ENCODE measurements at regions of chr2 and their contacts with region 1.

Region 1: GRCh38 chr2:28751252-28751955 is at the start of gene PPP1CB:
- DNase-seq: peak; percentile 99
- ATAC-seq: peak; percentile 86
- H3K4me3 ChIP-seq: peak within 1 kb of the TSS; percentile 86 to 99 (median 94)
- H3K4me3 Mint-ChIP-seq: peak within 1 kb of the TSS; percentile 95
- H3K27ac ChIP-seq: peak within 1 kb of the TSS; percentile 95 to 98
- H3K27ac Mint-ChIP-seq: peak within 1 kb of the TSS; percentile 96
- H3K4me1 ChIP-seq: peaks cover 29 to 33% of the 10 kb centered on the region in 2 donors
- H3K4me1 Mint-ChIP-seq: peaks cover 53% of the 10 kb centered on the region
- H3K27me3 ChIP-seq: no peaks in the 10 kb centered on the region
- H3K27me3 Mint-ChIP-seq: no peaks in the 10 kb centered on the region
- CTCF ChIP-seq: no peak
- total RNA-seq, gene PPP1CB: 152 and 161 TPM in 2 replicates

Region 2: GRCh38 chr2:27356382-27357181 is 1394.8 kb before region 1 on chr2 and contains the start of gene GTF3C2:
- CTCF ChIA-PET with region 1: no interaction called
- POLR2A ChIA-PET with region 1: no interaction called
- intact Hi-C with region 1: loop called (anchors 5 kb)
- DNase-seq: peak; percentile 98
- ATAC-seq: peak; percentile 82
- H3K4me3 ChIP-seq: peak within 1 kb of the TSS; percentile 64 to 90 (median 82)
- H3K4me3 Mint-ChIP-seq: peak within 1 kb of the TSS; percentile 97
- H3K27ac ChIP-seq: peak within 1 kb of the TSS; percentile 86 to 88
- H3K27ac Mint-ChIP-seq: peak within 1 kb of the TSS; percentile 99
- H3K4me1 ChIP-seq: peaks cover 18 to 25% of the 10 kb centered on the region in 2 donors
- H3K4me1 Mint-ChIP-seq: peaks cover 48% of the 10 kb centered on the region
- H3K27me3 ChIP-seq: no peaks in the 10 kb centered on the region
- H3K27me3 Mint-ChIP-seq: no peaks in the 10 kb centered on the region
- CTCF ChIP-seq: no peak
- total RNA-seq, gene GTF3C2: 114 and 121 TPM in 2 replicates

Region 3: DNA sequence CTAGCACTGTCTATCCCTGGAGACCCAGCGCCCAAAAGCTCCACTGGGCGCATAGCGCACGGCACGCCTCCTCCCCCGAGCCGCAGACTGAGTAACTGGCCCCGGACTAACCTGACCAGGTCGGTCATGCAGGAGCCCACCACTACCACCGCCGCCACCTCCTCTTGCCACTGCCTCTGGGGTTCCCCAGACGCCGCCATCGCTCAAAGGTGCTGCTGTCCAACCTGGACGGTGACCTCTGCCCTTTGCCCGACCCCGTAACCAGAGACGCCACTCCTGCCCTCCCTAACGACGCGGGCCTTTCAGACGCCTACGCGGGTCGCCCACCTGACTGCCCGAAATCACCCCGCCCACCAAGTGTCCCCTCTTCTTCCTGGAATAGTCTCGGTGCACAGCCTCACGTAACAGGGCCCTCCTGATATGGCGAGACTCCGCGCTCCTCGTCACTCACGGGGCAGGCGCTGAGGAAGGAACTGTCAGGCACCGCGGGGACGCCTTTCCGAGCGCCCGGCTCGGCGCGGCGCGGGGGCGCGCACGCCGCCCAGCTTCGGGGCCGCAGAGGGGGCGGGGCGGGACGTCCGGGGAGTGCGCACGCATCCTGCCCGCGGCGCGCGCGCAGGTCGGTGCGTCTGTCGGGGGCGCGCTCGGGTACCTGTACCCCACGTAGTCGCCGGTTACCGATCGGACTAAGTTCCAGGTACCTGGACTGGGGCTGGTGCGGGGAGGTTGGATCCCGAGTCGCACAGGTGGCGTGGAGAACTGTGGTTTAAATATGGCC is 861.1 kb before region 1 on chr2 and contains the starts of genes BABAM2 and RBKS:
- CTCF ChIA-PET with region 1: no interaction called
- POLR2A ChIA-PET with region 1: no interaction called
- intact Hi-C with region 1: loop called (anchors 5 kb)
- DNase-seq: peak; percentile 97
- ATAC-seq: peak; percentile 63
- H3K4me3 ChIP-seq: peak within 1 kb of the TSS; percentile 68 to 93 (median 84)
- H3K4me3 Mint-ChIP-seq: peak within 1 kb of the TSS; percentile 100
- H3K27ac ChIP-seq: peak within 1 kb of the TSS; percentile 99
- H3K27ac Mint-ChIP-seq: peak within 1 kb of the TSS; percentile 100
- H3K4me1 ChIP-seq: peaks cover 14 to 18% of the 10 kb centered on the region in 2 donors
- H3K4me1 Mint-ChIP-seq: peaks cover 61% of the 10 kb centered on the region
- H3K27me3 ChIP-seq: no peaks in the 10 kb centered on the region
- H3K27me3 Mint-ChIP-seq: peaks cover 3% of the 10 kb centered on the region
- CTCF ChIP-seq: no peak
- total RNA-seq, gene BABAM2: 69.6 and 70.6 TPM in 2 replicates
- total RNA-seq, gene RBKS: 6.4 and 6.8 TPM in 2 replicates

Region 4: GRCh38 chr2:28566521-28567041 is 184.8 kb before region 1 on chr2:
- CTCF ChIA-PET with region 1: interaction called, 3 read pairs
- POLR2A ChIA-PET with region 1: no interaction called
- intact Hi-C with region 1: loop called (anchors 1 kb)
- DNase-seq: peak; percentile 91
- ATAC-seq: peak; percentile 99
- H3K4me3 ChIP-seq: peak overlapping the region; percentile 36 to 90 (median 70)
- H3K4me3 Mint-ChIP-seq: peak overlapping the region; percentile 95
- H3K27ac ChIP-seq: no peak overlapping the region
- H3K27ac Mint-ChIP-seq: peak overlapping the region; percentile 72
- H3K4me1 ChIP-seq: peaks cover 5 to 11% of the 10 kb centered on the region in 2 donors
- H3K4me1 Mint-ChIP-seq: peaks cover 11% of the 10 kb centered on the region
- H3K27me3 ChIP-seq: peaks cover 0 to 5% (median 2%) of the 10 kb centered on the region in 4 experiments
- H3K27me3 Mint-ChIP-seq: peaks cover 14% of the 10 kb centered on the region
- CTCF ChIP-seq: peak; percentile 100

Region 5: DNA sequence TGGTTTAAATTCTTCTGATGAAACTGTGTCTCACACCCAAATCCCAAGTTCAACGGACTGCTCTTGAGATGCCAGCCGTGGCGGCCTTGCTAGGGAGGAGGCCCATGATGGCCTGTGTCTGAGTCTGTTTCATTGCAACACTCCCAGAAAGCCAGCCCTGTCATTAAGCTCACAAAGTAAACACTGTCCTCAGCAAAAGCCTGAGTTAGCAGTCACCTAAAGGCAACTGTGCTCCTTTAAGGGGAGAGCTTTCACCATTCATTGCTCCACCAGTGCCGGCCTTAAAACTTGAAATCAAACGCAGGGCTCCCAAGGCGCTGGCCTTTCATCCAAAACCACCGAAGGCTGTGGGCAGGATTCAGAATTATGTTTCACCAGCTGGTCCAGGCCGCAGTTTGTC is 42.3 kb before region 1 on chr2:
- CTCF ChIA-PET with region 1: no interaction called
- POLR2A ChIA-PET with region 1: no interaction called
- intact Hi-C with region 1: no loop called
- DNase-seq: no peak
- ATAC-seq: no peak
- H3K4me3 ChIP-seq: no peak overlapping the region
- H3K4me3 Mint-ChIP-seq: no peak overlapping the region
- H3K27ac ChIP-seq: no peak overlapping the region
- H3K27ac Mint-ChIP-seq: no peak overlapping the region
- H3K4me1 ChIP-seq: no peaks in the 10 kb centered on the region
- H3K4me1 Mint-ChIP-seq: no peaks in the 10 kb centered on the region
- H3K27me3 ChIP-seq: no peaks in the 10 kb centered on the region
- H3K27me3 Mint-ChIP-seq: no peaks in the 10 kb centered on the region
- CTCF ChIP-seq: no peak

Region 6: DNA sequence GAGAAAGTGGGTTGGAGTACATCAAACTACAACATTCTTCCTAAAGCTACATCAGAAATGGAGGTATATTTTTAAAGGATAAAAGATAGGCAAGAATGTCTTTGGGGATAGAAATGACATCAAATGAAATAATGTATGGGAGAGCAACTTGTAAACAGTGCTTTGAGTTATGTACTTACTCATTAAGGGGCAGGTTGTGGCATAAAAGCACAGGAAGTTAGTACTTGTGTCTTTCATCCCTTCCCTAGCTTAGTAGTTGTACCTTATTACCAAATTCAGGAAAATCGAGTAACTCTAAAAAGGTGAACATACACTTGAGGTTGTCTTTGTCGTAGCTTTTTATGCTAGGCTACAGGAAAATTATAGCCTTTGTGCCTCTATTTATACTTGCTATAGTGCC is 29.1 kb after region 1 on chr2:
- CTCF ChIA-PET with region 1: no interaction called
- POLR2A ChIA-PET with region 1: no interaction called
- intact Hi-C with region 1: loop called (anchors 2 kb)
- DNase-seq: no peak
- ATAC-seq: no peak
- H3K4me3 ChIP-seq: no peak overlapping the region
- H3K4me3 Mint-ChIP-seq: no peak overlapping the region
- H3K27ac ChIP-seq: peak overlapping the region in 1 of 2 donors; percentile 3
- H3K27ac Mint-ChIP-seq: no peak overlapping the region
- H3K4me1 ChIP-seq: no peaks in the 10 kb centered on the region
- H3K4me1 Mint-ChIP-seq: peaks cover 5% of the 10 kb centered on the region
- H3K27me3 ChIP-seq: no peaks in the 10 kb centered on the region
- H3K27me3 Mint-ChIP-seq: no peaks in the 10 kb centered on the region
- CTCF ChIP-seq: no peak

Region 7: GRCh38 chr2:28870146-28870891 is 118.9 kb after region 1 on chr2 and contains the start of gene TRMT61B:
- CTCF ChIA-PET with region 1: no interaction called
- POLR2A ChIA-PET with region 1: interaction called, 6 read pairs
- intact Hi-C with region 1: loop called (anchors 1 kb)
- DNase-seq: peak; percentile 98
- ATAC-seq: peak; percentile 96
- H3K4me3 ChIP-seq: peak within 1 kb of the TSS; percentile 71 to 92 (median 90)
- H3K4me3 Mint-ChIP-seq: peak within 1 kb of the TSS; percentile 99
- H3K27ac ChIP-seq: peak within 1 kb of the TSS; percentile 85 to 94
- H3K27ac Mint-ChIP-seq: peak within 1 kb of the TSS; percentile 100
- H3K4me1 ChIP-seq: peaks cover 20 to 23% of the 10 kb centered on the region in 2 donors
- H3K4me1 Mint-ChIP-seq: peaks cover 29% of the 10 kb centered on the region
- H3K27me3 ChIP-seq: peaks cover 0 to 6% (median 0%) of the 10 kb centered on the region in 4 experiments
- H3K27me3 Mint-ChIP-seq: peaks cover 2% of the 10 kb centered on the region
- CTCF ChIP-seq: no peak
- total RNA-seq, gene TRMT61B: 20.3 and 23.0 TPM in 2 replicates

Region 8: DNA sequence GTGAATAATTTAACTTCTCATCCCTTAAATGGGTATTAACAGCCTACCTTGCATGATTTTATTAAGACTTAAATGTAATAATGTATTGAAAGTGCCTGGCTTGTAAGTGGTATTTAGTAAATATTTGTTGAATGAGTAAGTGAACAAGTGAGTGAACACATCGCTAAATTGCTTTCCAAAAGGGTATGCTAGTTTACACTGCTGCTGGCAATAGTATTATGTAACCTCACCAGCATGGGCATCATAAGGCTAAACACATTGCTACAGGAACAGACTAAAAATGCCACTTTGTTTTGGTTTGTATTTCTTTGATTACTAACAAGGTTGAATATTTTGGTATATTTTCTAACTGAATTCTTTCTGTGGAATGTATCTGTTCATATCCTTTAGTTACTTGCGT is 152.9 kb after region 1 on chr2:
- CTCF ChIA-PET with region 1: no interaction called
- POLR2A ChIA-PET with region 1: no interaction called
- intact Hi-C with region 1: no loop called
- DNase-seq: no peak
- ATAC-seq: no peak
- H3K4me3 ChIP-seq: no peak overlapping the region
- H3K4me3 Mint-ChIP-seq: no peak overlapping the region
- H3K27ac ChIP-seq: no peak overlapping the region
- H3K27ac Mint-ChIP-seq: no peak overlapping the region
- H3K4me1 ChIP-seq: no peaks in the 10 kb centered on the region
- H3K4me1 Mint-ChIP-seq: peaks cover 23% of the 10 kb centered on the region
- H3K27me3 ChIP-seq: no peaks in the 10 kb centered on the region
- H3K27me3 Mint-ChIP-seq: no peaks in the 10 kb centered on the region
- CTCF ChIP-seq: no peak